HCT116 (cell line): ENCODE measurements at regions of chr11 and their contacts with region 1.

Region 1: GRCh38 chr11:1832211-1832919 is 2.4 kb upstream of the SYT8 start:
- DNase-seq: no peak
- ATAC-seq: peak; percentile 54
- H3K4me3 ChIP-seq: peak overlapping the region; percentile 31 to 55
- H3K27ac ChIP-seq: no peak overlapping the region; the same call in 1 of the 2 replicates
- H3K4me1 ChIP-seq: peaks cover 57 to 82% of the 10 kb centered on the region in 2 experiments
- H3K27me3 ChIP-seq: no peaks in the 10 kb centered on the region
- CTCF ChIP-seq: peak in 2 of 3 experiments; percentile 94 to 96; a peak in 4 of 6 replicates
- POLR2A ChIP-seq: no peak
- RAD21 ChIP-seq: no peak

Region 2: GRCh38 chr11:1546536-1547400 is 285.6 kb before region 1 on chr11:
- CTCF ChIA-PET with region 1: interaction called, 9 read pairs
- POLR2A ChIA-PET with region 1: no interaction called
- RAD21 ChIA-PET with region 1: no interaction called
- intact Hi-C with region 1: loop called (anchors 2 kb)
- DNase-seq: no peak
- ATAC-seq: peak; percentile 76
- H3K4me3 ChIP-seq: peak overlapping the region; percentile 50 to 62
- H3K27ac ChIP-seq: peak overlapping the region; percentile 88
- H3K4me1 ChIP-seq: peaks cover 17 to 37% of the 10 kb centered on the region in 2 experiments
- H3K27me3 ChIP-seq: no peaks in the 10 kb centered on the region
- CTCF ChIP-seq: peak in 2 of 3 experiments; percentile 69 to 80; a peak in 4 of 6 replicates
- POLR2A ChIP-seq: no peak
- RAD21 ChIP-seq: no peak

Region 3: DNA sequence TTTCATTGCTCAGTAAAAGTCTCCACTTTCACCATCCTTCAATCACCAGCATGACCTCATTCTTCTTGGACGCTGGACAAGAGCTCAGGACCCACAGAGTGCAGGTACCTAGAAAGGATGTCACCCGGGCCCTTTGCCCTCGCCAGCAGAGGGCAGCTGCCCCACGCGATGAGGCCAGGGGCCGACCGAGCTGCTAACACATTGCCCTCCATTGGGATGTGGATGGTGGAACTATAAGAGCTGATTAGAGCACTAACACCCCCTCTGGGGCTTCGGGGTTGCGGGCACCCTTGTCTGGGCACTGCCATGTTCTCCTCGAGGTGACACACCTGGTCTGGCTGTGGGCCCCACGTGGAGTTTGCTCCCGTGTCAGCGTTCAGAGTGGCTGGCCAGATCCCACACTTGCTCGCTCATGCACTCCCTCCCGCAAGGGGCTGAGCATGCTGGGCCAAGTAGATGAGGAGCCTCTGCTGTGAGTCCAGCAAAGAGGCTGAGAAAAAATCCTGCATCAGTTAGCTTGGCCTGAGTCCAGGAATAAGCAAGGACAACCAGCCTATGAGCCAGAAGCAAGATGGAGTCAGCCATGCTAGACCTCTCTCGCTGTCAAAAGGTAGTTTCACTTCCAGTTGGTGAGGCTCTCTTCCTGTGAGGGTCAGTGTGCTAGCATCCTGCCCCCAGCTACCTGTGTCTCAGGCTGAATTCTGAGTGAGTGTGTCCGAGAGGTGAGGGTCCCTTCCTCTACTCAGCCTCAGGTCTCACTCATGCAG is 125.5 kb before region 1 on chr11:
- CTCF ChIA-PET with region 1: interaction called, 24 read pairs
- POLR2A ChIA-PET with region 1: interaction called, 4 read pairs
- RAD21 ChIA-PET with region 1: interaction called, 4 to 5 read pairs
- intact Hi-C with region 1: no loop called
- DNase-seq: no peak
- ATAC-seq: peak; percentile 55; the same call in 1 of the 2 replicates
- H3K4me3 ChIP-seq: no peak overlapping the region
- H3K27ac ChIP-seq: no peak overlapping the region
- H3K4me1 ChIP-seq: no peaks in the 10 kb centered on the region
- H3K27me3 ChIP-seq: no peaks in the 10 kb centered on the region
- CTCF ChIP-seq: peak; percentile 28 to 38 (median 34); a peak in 3 of 6 replicates
- POLR2A ChIP-seq: no peak
- RAD21 ChIP-seq: peak; percentile 61

Region 4: DNA sequence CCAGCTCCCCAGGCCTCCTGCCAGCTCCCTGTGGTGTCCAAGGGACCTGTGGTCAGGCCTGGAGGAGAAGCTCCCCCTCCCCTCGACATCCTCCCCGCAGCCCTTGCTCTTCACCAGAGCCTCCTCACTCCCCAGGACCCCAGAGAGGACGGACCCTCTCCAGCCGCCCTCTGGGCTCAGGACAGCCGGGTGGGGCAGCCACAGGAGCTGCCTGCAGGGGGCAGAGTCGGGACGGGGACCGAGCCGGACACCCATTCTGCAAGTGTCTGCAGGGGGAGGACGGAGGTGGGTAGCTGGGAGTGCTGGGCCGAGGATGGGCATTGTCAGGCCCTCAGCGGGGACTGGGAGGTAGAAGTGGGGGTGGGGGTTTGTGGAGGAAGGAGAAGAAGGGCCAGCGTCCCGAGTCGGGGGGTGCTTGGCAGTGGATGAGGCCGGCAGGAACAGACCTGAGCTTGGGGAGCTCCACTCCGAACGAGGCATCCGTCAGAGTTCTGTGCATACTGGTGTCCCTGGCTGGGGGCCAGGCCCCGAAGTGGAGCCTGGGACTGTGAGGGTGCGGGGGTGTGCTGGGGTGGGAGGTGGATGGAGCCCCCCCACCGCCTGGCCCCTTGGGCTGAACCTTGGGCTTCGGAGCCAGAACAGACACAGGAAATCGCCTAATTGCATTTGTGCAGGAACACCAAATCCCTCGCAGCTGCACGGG is 44.1 kb after region 1 on chr11:
- CTCF ChIA-PET with region 1: interaction called, 15 read pairs
- POLR2A ChIA-PET with region 1: no interaction called
- RAD21 ChIA-PET with region 1: interaction called in 1 of 2 experiments, 5 read pairs
- intact Hi-C with region 1: no loop called
- DNase-seq: no peak
- ATAC-seq: peak; percentile 94
- H3K4me3 ChIP-seq: no peak overlapping the region
- H3K27ac ChIP-seq: no peak overlapping the region; the same call in 1 of the 2 replicates
- H3K4me1 ChIP-seq: peaks cover 0 to 4% of the 10 kb centered on the region in 2 experiments; a peak in 1 of 4 replicates
- H3K27me3 ChIP-seq: no peaks in the 10 kb centered on the region
- CTCF ChIP-seq: peak; percentile 67 to 95 (median 79); a peak in 5 of 6 replicates
- POLR2A ChIP-seq: no peak
- RAD21 ChIP-seq: no peak; the same call in 1 of the 2 replicates